CD8-positive, alpha-beta T cell (primary cell): ENCODE measurements at regions of chr2 and their contacts with region 1.

Region 1: DNA sequence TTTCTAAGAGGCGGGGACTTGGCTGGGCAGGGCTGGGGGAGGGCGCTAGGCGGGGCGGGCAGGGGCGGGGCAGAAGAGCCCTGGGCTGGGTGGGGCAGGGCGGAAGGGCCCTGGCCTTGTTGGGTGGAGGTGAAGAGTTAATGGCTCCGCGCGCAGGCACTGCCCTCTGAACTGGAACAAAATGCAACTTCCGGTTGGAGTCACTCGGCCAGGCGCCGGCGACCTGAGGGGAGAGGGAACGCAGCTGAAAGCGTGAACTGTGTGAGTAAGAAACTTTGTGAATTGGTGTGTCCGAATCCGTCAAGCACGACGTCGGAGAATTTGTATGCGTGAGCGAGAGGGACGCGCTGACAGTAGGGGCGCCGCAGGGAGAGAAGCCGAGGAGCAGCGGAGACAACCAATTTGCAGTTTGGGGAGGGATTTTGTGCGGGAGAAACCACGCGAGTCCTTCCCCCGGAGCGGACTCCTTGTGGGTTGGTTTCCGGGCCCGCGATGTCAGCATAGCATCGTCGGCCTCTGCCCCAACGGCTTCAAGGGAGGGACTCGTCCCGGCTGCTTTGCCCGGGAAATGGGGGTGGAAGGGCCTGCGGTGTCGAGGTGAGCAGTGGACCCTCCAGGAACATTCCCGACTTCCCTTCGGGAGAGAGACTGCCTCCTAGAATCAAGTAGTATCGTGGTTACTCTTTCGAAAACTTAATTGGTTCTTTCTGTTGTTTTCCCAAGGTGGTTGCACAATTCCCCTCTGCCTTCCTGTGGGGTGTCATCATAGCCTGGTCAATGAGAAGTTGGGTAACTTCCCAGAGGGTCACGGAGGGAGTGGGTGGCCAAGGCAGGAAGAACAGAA is at the start of gene TANK:
- DNase-seq: peak; percentile 77 to 96 (median 87)
- ATAC-seq: peak; percentile 91
- H3K4me3 ChIP-seq: peak within 1 kb of the TSS; percentile 72 to 97
- H3K4me3 Mint-ChIP-seq: peak within 1 kb of the TSS; percentile 96
- H3K27ac ChIP-seq: peak within 1 kb of the TSS; percentile 70 to 96
- H3K27ac Mint-ChIP-seq: peak within 1 kb of the TSS; percentile 93
- H3K4me1 ChIP-seq: peaks cover 21% of the 10 kb centered on the region
- H3K4me1 Mint-ChIP-seq: peaks cover 51% of the 10 kb centered on the region
- H3K27me3 ChIP-seq: no peaks in the 10 kb centered on the region
- H3K27me3 Mint-ChIP-seq: no peaks in the 10 kb centered on the region
- CTCF ChIP-seq: no peak
- total RNA-seq, gene TANK: 63.0 to 79.1 TPM

Region 2: GRCh38 chr2:159286709-159287441 is 1873.6 kb before region 1 on chr2:
- CTCF ChIA-PET with region 1: no interaction called
- POLR2A ChIA-PET with region 1: no interaction called
- intact Hi-C with region 1: loop called (anchors 2 to 10 kb)
- DNase-seq: peak; percentile 93 to 99 (median 97)
- ATAC-seq: peak; percentile 99
- H3K4me3 ChIP-seq: peak overlapping the region; percentile 65 to 86
- H3K4me3 Mint-ChIP-seq: peak overlapping the region; percentile 90
- H3K27ac ChIP-seq: peak overlapping the region; percentile 58 to 69
- H3K27ac Mint-ChIP-seq: peak overlapping the region; percentile 86
- H3K4me1 ChIP-seq: peaks cover 18% of the 10 kb centered on the region
- H3K4me1 Mint-ChIP-seq: peaks cover 33% of the 10 kb centered on the region
- H3K27me3 ChIP-seq: no peaks in the 10 kb centered on the region
- H3K27me3 Mint-ChIP-seq: no peaks in the 10 kb centered on the region
- CTCF ChIP-seq: no peak

Region 3: DNA sequence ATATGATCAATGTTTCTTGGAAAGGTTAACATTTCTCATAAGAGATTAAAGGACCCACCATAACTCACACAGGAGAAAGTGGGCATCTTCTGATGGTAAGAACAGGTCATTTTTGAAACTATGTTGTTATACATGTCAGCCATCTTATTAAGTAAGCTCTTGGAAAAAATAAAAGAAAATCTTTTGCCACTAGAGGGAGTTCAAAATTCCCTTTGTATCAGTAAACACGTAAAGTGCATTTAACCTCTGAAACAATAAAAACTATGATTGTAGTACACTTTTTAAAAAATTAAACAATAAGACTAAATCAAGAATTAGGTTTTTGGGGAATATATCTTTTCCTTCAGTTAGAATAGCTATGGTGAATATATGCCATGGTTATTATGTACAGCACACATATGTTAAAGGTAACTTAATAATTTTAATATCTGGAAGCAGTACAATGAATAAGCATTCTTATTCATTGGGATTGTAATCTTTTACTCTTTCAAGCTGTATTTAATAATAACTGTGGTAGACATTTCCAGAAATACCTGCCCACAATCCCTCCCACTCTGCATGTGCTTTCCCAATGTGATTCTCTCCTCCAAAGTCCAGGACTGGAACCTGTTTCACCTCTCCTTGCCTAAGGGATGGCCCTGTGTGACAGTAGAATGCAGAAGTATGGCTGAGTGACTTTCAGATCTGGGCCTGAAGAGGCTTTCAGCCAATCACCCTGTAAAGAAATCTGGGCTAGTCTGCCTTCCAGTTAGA is 731.0 kb before region 1 on chr2:
- CTCF ChIA-PET with region 1: no interaction called
- POLR2A ChIA-PET with region 1: no interaction called
- intact Hi-C with region 1: loop called in 1 of 2 experiments (anchors 10 kb)
- DNase-seq: peak in 2 of 9 experiments; percentile 72 to 81
- ATAC-seq: peak; percentile 53
- H3K4me3 ChIP-seq: no peak overlapping the region
- H3K4me3 Mint-ChIP-seq: peak overlapping the region; percentile 26
- H3K27ac ChIP-seq: peak overlapping the region in 1 of 2 experiments; percentile 77
- H3K27ac Mint-ChIP-seq: peak overlapping the region; percentile 92
- H3K4me1 ChIP-seq: peaks cover 42% of the 10 kb centered on the region
- H3K4me1 Mint-ChIP-seq: peaks cover 71% of the 10 kb centered on the region
- H3K27me3 ChIP-seq: no peaks in the 10 kb centered on the region
- H3K27me3 Mint-ChIP-seq: no peaks in the 10 kb centered on the region
- CTCF ChIP-seq: peak; percentile 84

Region 4: DNA sequence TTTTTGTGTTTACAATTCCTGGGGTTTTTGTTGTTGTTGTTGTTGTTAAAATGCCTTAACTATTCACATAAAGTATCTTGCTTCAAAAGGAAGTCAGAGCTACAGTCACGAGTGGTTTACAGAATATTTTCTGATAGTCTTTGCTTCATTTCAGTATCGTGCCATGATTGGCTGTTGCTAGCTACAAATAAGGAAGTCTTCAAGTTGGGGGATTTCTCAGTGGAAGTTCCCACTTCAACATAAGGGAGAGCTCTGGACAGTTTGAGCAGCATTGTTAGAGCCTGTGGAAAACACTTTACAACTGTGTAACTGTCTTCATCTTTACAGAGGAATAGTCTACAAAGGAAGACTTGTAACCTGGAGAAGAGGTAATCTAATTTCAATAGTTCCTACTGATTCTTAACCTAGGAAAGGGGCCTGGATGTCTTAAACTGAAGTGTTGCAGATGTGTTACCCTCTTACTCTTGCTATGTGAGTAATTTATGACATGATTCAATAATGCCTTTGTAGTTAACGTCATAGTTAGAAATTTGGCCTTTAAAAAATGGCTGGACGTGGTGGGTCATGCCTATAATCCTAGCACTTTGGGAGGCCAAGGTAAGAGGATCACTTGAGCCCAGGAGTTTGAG is 23.6 kb before region 1 on chr2:
- CTCF ChIA-PET with region 1: no interaction called
- POLR2A ChIA-PET with region 1: interaction called, 4 read pairs
- intact Hi-C with region 1: loop called (anchors 1 to 2 kb)
- DNase-seq: peak in 6 of 9 experiments; percentile 9 to 93 (median 28)
- ATAC-seq: peak; percentile 83
- H3K4me3 ChIP-seq: peak overlapping the region; percentile 47 to 48
- H3K4me3 Mint-ChIP-seq: peak overlapping the region; percentile 87
- H3K27ac ChIP-seq: peak overlapping the region; percentile 46 to 94
- H3K27ac Mint-ChIP-seq: peak overlapping the region; percentile 96
- H3K4me1 ChIP-seq: peaks cover 22% of the 10 kb centered on the region
- H3K4me1 Mint-ChIP-seq: peaks cover 55% of the 10 kb centered on the region
- H3K27me3 ChIP-seq: no peaks in the 10 kb centered on the region
- H3K27me3 Mint-ChIP-seq: no peaks in the 10 kb centered on the region
- CTCF ChIP-seq: no peak

Region 5: GRCh38 chr2:161243905-161244304 is 83.5 kb after region 1 on chr2:
- CTCF ChIA-PET with region 1: interaction called, 3 read pairs
- POLR2A ChIA-PET with region 1: no interaction called
- intact Hi-C with region 1: loop called (anchors 2 to 5 kb)
- DNase-seq: peak in 3 of 9 experiments; percentile 7 to 17 (median 17)
- ATAC-seq: no peak
- H3K4me3 ChIP-seq: peak overlapping the region; percentile 40 to 54
- H3K4me3 Mint-ChIP-seq: peak overlapping the region; percentile 89
- H3K27ac ChIP-seq: peak overlapping the region; percentile 52 to 55
- H3K27ac Mint-ChIP-seq: peak overlapping the region; percentile 94
- H3K4me1 ChIP-seq: peaks cover 25% of the 10 kb centered on the region
- H3K4me1 Mint-ChIP-seq: peaks cover 58% of the 10 kb centered on the region
- H3K27me3 ChIP-seq: no peaks in the 10 kb centered on the region
- H3K27me3 Mint-ChIP-seq: peaks cover 6% of the 10 kb centered on the region
- CTCF ChIP-seq: no peak

Region 6: DNA sequence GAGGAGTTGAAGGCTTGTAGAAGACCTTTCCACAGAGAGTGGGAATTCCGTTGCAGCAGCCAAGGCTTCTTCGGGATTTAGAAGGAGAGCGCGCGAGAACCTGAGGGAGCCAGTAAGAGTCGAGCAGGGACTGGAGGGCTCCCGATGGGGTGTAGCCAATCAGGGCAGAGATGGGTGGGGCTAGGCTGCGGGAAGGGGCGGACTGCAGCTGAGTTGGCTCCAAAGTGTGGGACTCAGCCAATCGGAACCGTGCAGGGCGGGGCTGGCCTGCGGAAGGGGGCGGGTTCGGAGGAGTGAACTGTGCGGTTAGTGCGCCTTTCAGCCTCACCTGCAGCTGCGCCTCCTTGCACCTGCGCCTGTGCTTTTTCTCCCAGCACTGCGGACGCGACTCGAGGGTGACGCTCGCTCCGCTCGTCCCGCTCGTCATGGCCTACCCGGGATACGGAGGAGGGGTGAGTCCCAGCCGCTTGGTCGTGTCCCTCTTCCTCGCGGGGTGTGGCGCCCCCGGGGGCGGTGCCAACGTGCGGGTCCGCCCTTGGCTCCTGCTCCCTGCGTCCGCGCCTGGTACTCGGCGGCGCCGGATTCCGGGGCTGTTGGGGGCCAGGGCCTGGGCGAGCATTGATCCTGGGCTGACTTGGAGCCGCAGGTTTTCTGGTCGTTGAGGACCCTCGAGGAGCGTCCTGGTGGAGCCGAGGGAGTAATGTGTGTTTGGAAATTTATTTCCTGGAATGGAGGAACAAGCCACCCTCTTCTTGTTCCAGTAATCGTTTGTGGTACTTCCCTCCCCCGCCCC is 1183.6 kb after region 1 on chr2 and contains the start of gene GCA:
- CTCF ChIA-PET with region 1: no interaction called
- POLR2A ChIA-PET with region 1: no interaction called
- intact Hi-C with region 1: loop called in 1 of 2 experiments (anchors 1 kb)
- DNase-seq: peak; percentile 95 to 98 (median 98)
- ATAC-seq: peak; percentile 98
- H3K4me3 ChIP-seq: peak within 1 kb of the TSS; percentile 71 to 81
- H3K4me3 Mint-ChIP-seq: peak within 1 kb of the TSS; percentile 91
- H3K27ac ChIP-seq: peak within 1 kb of the TSS in 1 of 2 experiments; percentile 34
- H3K27ac Mint-ChIP-seq: peak within 1 kb of the TSS; percentile 80
- H3K4me1 ChIP-seq: peaks cover 8% of the 10 kb centered on the region
- H3K4me1 Mint-ChIP-seq: peaks cover 17% of the 10 kb centered on the region
- H3K27me3 ChIP-seq: no peaks in the 10 kb centered on the region
- H3K27me3 Mint-ChIP-seq: no peaks in the 10 kb centered on the region
- CTCF ChIP-seq: no peak
- total RNA-seq, gene GCA: 3.2 to 4.0 TPM